MCF 10A (cell line): ENCODE measurements at regions of chr17 and their contacts with region 1.

Region 1: DNA sequence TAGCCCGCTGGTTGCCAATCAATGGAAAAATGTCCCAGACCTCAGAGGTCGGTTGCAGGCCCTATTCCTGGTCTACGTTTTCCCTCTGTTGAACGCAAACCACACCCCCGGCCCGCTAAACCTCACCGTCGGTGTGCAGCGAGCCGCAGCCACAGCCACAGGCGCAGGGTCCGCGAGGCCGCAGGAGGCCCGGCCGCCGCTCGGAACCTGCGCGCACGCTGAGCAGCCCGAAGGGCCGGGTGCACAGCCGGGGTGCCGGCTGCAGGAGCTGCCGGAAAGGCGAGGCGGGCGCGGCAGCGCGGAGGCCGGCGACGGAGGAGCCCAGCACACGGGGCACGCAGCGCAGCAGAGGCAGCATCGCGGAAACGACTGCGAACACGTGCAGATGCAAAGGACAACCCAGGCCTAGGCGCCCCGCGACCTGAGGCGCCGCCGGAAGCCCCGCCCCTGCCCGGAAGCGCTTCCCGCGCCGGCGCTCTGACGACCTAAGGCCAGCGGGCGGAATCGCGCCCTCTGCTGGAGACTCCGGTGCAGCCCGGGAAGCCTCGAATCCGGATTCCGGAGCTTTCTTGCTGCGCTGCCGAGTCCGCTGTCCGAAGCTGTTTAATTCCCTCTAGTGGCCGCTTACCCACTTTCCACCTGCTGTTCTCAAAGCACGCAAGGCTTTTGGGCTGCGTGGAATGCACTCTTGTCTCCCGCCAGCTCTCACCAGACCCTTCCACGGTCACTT is at the start of gene C1QBP:
- DNase-seq: peak; percentile 91
- H3K4me3 Mint-ChIP-seq: peak within 1 kb of the TSS; percentile 71
- H3K27ac Mint-ChIP-seq: peak within 1 kb of the TSS; percentile 46
- H3K4me1 Mint-ChIP-seq: peaks cover 16% of the 10 kb centered on the region
- H3K27me3 Mint-ChIP-seq: no peaks in the 10 kb centered on the region
- CTCF ChIP-seq: peak; percentile 99
- total RNA-seq, gene C1QBP: 386 and 438 TPM in 2 replicates

Region 2: DNA sequence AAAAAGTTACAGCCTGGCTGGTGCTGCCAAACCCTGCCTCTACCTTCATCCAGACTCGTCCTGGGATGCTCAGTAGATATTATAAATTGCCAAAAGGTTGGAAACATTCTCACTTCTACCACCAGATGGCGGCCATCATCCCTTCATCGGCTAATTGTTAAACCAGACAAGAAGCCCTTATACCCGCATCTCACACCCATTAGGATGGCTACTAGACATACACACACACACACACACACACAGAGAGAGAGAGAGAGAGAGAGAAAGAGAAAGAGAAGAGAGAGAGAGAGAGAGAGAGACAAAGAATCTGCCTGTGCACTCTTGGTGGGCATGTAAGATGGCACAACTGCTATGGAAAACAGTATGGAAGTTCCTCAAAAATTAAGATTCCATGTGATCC is 189.3 kb before region 1 on chr17:
- CTCF ChIA-PET with region 1: interaction called, 11 read pairs
- POLR2A ChIA-PET with region 1: interaction called, 3 read pairs
- intact Hi-C with region 1: no loop called
- DNase-seq: peak; percentile 86
- H3K4me3 Mint-ChIP-seq: no peak overlapping the region
- H3K27ac Mint-ChIP-seq: no peak overlapping the region
- H3K4me1 Mint-ChIP-seq: no peaks in the 10 kb centered on the region
- H3K27me3 Mint-ChIP-seq: no peaks in the 10 kb centered on the region
- CTCF ChIP-seq: peak; percentile 37

Region 3: DNA sequence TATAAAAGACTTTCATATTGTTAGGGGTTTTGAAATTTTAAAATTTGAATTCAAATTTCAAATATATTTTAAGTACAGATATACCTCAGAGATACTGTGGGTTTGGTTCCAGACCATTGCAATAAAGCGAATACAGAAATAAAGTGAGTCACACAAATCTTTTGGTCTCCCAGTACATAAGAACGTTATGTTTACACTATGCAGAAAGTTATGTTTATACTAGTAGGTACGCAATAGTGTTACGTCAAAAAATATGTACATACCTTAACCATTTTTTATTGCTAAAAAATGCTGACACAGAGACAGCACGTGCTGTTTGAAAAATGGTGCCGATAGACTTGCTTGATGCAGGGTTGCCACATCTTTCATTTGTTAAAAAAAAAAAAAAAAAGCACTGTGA is 39.1 kb before region 1 on chr17:
- CTCF ChIA-PET with region 1: interaction called, 12 read pairs
- POLR2A ChIA-PET with region 1: interaction called, 5 read pairs
- intact Hi-C with region 1: no loop called
- DNase-seq: peak; percentile 46
- H3K4me3 Mint-ChIP-seq: no peak overlapping the region
- H3K27ac Mint-ChIP-seq: no peak overlapping the region
- H3K4me1 Mint-ChIP-seq: no peaks in the 10 kb centered on the region
- H3K27me3 Mint-ChIP-seq: no peaks in the 10 kb centered on the region
- CTCF ChIP-seq: no peak

Region 4: DNA sequence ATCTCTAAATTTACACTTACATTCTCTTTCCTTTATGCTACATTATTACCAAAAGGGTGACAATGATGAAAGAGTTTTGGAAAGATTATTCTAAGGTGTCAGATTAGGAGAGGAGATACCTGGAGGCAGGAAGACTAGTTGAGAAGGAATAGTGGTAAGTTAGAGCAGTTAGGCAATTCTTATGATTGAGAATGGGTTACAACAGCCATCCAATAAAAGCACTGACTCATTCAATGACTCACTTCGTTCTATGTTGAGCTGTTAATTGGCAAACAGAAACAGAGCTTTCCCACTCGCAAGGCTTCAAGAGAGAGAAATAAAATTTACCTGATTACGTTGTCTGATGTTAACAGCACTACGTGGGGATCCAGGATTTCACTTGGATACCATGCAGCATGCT is 25.2 kb before region 1 on chr17:
- CTCF ChIA-PET with region 1: interaction called, 13 read pairs
- POLR2A ChIA-PET with region 1: interaction called, 78 read pairs
- intact Hi-C with region 1: no loop called
- DNase-seq: peak; percentile 92
- H3K4me3 Mint-ChIP-seq: peak overlapping the region; percentile 49
- H3K27ac Mint-ChIP-seq: peak overlapping the region; percentile 6
- H3K4me1 Mint-ChIP-seq: peaks cover 21% of the 10 kb centered on the region
- H3K27me3 Mint-ChIP-seq: no peaks in the 10 kb centered on the region
- CTCF ChIP-seq: no peak

Region 5: GRCh38 chr17:5419356-5419958 is 19.4 kb before region 1 on chr17 and contains the start of gene NUP88:
- CTCF ChIA-PET with region 1: interaction called, 21 read pairs
- POLR2A ChIA-PET with region 1: interaction called, 100 read pairs
- intact Hi-C with region 1: loop called (anchors 1 kb)
- DNase-seq: peak; percentile 97
- H3K4me3 Mint-ChIP-seq: peak within 1 kb of the TSS; percentile 98
- H3K27ac Mint-ChIP-seq: peak within 1 kb of the TSS; percentile 96
- H3K4me1 Mint-ChIP-seq: peaks cover 17% of the 10 kb centered on the region
- H3K27me3 Mint-ChIP-seq: no peaks in the 10 kb centered on the region
- CTCF ChIP-seq: no peak
- total RNA-seq, gene NUP88: 88.2 and 89.2 TPM in 2 replicates

Region 6: GRCh38 chr17:5468075-5468473 is 29.2 kb after region 1 on chr17:
- CTCF ChIA-PET with region 1: interaction called, 7 read pairs
- POLR2A ChIA-PET with region 1: interaction called, 17 read pairs
- intact Hi-C with region 1: no loop called
- DNase-seq: no peak
- H3K4me3 Mint-ChIP-seq: peak overlapping the region; percentile 92
- H3K27ac Mint-ChIP-seq: peak overlapping the region; percentile 93
- H3K4me1 Mint-ChIP-seq: peaks cover 33% of the 10 kb centered on the region
- H3K27me3 Mint-ChIP-seq: no peaks in the 10 kb centered on the region
- CTCF ChIP-seq: no peak

Region 7: GRCh38 chr17:5486204-5487124 is 47.6 kb after region 1 on chr17 and contains the start of gene MIS12:
- CTCF ChIA-PET with region 1: interaction called, 8 read pairs
- POLR2A ChIA-PET with region 1: interaction called, 23 read pairs
- intact Hi-C with region 1: no loop called
- DNase-seq: peak; percentile 100
- H3K4me3 Mint-ChIP-seq: peak within 1 kb of the TSS; percentile 91
- H3K27ac Mint-ChIP-seq: peak within 1 kb of the TSS; percentile 99
- H3K4me1 Mint-ChIP-seq: peaks cover 14% of the 10 kb centered on the region
- H3K27me3 Mint-ChIP-seq: no peaks in the 10 kb centered on the region
- CTCF ChIP-seq: no peak
- total RNA-seq, gene MIS12: 32.8 and 44.2 TPM in 2 replicates